ENCODE measurements at regions of chr10 and their contacts with region 1.

Region 1: GRCh38 chr10:116444527-116445142 is 17.0 kb downstream of the PNLIPRP3 start:
- DNase-seq: peak; percentile 46
- H3K4me3 Mint-ChIP-seq: no peak overlapping the region
- H3K27ac Mint-ChIP-seq: no peak overlapping the region
- H3K4me1 Mint-ChIP-seq: peaks cover 20% of the 10 kb centered on the region
- H3K27me3 Mint-ChIP-seq: no peaks in the 10 kb centered on the region
- CTCF ChIP-seq: peak; percentile 69

Region 2: GRCh38 chr10:116132780-116133399 is 311.7 kb before region 1 on chr10:
- CTCF ChIA-PET with region 1: no interaction called
- POLR2A ChIA-PET with region 1: no interaction called
- intact Hi-C with region 1: no loop called
- DNase-seq: no peak
- H3K4me3 Mint-ChIP-seq: no peak overlapping the region
- H3K27ac Mint-ChIP-seq: no peak overlapping the region
- H3K4me1 Mint-ChIP-seq: no peaks in the 10 kb centered on the region
- H3K27me3 Mint-ChIP-seq: no peaks in the 10 kb centered on the region
- CTCF ChIP-seq: no peak

Region 3: GRCh38 chr10:116457488-116457887 is 12.9 kb after region 1 on chr10:
- CTCF ChIA-PET with region 1: interaction called, 12 read pairs
- POLR2A ChIA-PET with region 1: interaction called, 3 read pairs
- intact Hi-C with region 1: no loop called
- DNase-seq: no peak
- H3K4me3 Mint-ChIP-seq: no peak overlapping the region
- H3K27ac Mint-ChIP-seq: no peak overlapping the region
- H3K4me1 Mint-ChIP-seq: no peaks in the 10 kb centered on the region
- H3K27me3 Mint-ChIP-seq: no peaks in the 10 kb centered on the region
- CTCF ChIP-seq: no peak